GM13977 (cell line): ENCODE measurements at regions of chr9 and their contacts with region 1.

Region 1: GRCh38 chr9:31799953-31800609 is 584.4 kb upstream of the ACO1 start:
- DNase-seq: no peak
- CTCF ChIP-seq: peak; percentile 61

Region 2: GRCh38 chr9:31140316-31140715 is 659.8 kb before region 1 on chr9:
- in situ Hi-C with region 1: loop called (anchors 25 kb)
- DNase-seq: no peak
- CTCF ChIP-seq: peak; percentile 32

Region 3: GRCh38 chr9:31574006-31574765 is 225.9 kb before region 1 on chr9:
- in situ Hi-C with region 1: no loop called
- DNase-seq: no peak
- CTCF ChIP-seq: no peak

Region 4: GRCh38 chr9:32456564-32456963 is 656.5 kb after region 1 on chr9:
- in situ Hi-C with region 1: no loop called
- DNase-seq: no peak
- CTCF ChIP-seq: no peak